Ovary (tissue), 10 donors: ENCODE measurements at regions of chr7 and their contacts with region 1.

Region 1: GRCh38 chr7:47254081-47255006 is 327.6 kb downstream of the TNS3 start:
- DNase-seq: peak; percentile 86 to 92 (median 86)
- H3K4me3 ChIP-seq: peak overlapping the region; percentile 48
- H3K27ac ChIP-seq: peak overlapping the region; percentile 80 to 91
- H3K4me1 ChIP-seq: peaks cover 6% of the 10 kb centered on the region
- H3K27me3 ChIP-seq: no peaks in the 10 kb centered on the region
- CTCF ChIP-seq: peak; percentile 85 to 97 (median 97)
- EP300 ChIP-seq: no peak
- POLR2A ChIP-seq: peak; percentile 19

Region 2: GRCh38 chr7:45917658-45918057 is 1336.7 kb before region 1 on chr7:
- intact Hi-C with region 1: loop called (anchors 5 to 10 kb)
- DNase-seq: peak; percentile 77 to 88 (median 87)
- H3K4me3 ChIP-seq: peak overlapping the region; percentile 78
- H3K27ac ChIP-seq: no peak overlapping the region
- H3K4me1 ChIP-seq: peaks cover 4% of the 10 kb centered on the region
- H3K27me3 ChIP-seq: no peaks in the 10 kb centered on the region
- CTCF ChIP-seq: peak; percentile 80 to 87 (median 85)
- EP300 ChIP-seq: no peak
- POLR2A ChIP-seq: no peak

Region 3: DNA sequence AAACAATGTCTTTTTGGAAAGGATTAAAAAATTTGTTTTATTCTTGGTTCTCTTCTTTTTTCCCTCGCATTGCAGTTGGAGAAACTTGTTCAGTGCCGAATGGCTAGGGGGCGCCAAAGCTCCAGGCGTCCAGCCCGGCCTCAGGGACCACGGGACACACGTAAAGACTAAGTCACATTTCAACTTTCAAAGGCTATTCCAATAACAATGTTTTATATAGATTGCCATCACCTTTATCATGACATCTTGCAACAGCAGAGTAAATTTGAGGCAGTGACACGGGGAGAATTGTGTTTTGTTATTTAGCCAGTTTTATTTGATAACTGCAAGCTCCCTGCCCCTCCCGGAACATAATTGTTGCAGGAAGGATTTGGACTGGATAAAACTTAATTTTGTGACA is 1331.1 kb before region 1 on chr7:
- intact Hi-C with region 1: loop called (anchors 5 to 10 kb)
- DNase-seq: peak; percentile 66 to 83 (median 81)
- H3K4me3 ChIP-seq: no peak overlapping the region
- H3K27ac ChIP-seq: no peak overlapping the region
- H3K4me1 ChIP-seq: peaks cover 4% of the 10 kb centered on the region
- H3K27me3 ChIP-seq: no peaks in the 10 kb centered on the region
- CTCF ChIP-seq: peak; percentile 53 to 80 (median 76)
- EP300 ChIP-seq: no peak
- POLR2A ChIP-seq: no peak

Region 4: GRCh38 chr7:46713870-46714596 is 540.3 kb before region 1 on chr7:
- intact Hi-C with region 1: no loop called
- DNase-seq: peak in 3 of 5 donors; percentile 37 to 55 (median 52)
- H3K4me3 ChIP-seq: no peak overlapping the region
- H3K27ac ChIP-seq: no peak overlapping the region
- H3K4me1 ChIP-seq: peaks cover 12% of the 10 kb centered on the region
- H3K27me3 ChIP-seq: no peaks in the 10 kb centered on the region
- CTCF ChIP-seq: no peak
- EP300 ChIP-seq: no peak
- POLR2A ChIP-seq: no peak

Region 5: GRCh38 chr7:48109848-48110663 is 855.7 kb after region 1 on chr7:
- intact Hi-C with region 1: loop called in 1 of 4 experiments (anchors 10 kb)
- DNase-seq: peak; percentile 46 to 78 (median 74)
- H3K4me3 ChIP-seq: no peak overlapping the region
- H3K27ac ChIP-seq: no peak overlapping the region
- H3K4me1 ChIP-seq: no peaks in the 10 kb centered on the region
- H3K27me3 ChIP-seq: no peaks in the 10 kb centered on the region
- CTCF ChIP-seq: peak; percentile 91 to 96 (median 93)
- EP300 ChIP-seq: no peak
- POLR2A ChIP-seq: no peak